Activated naive CD4-positive, alpha-beta T cell treated with anti-CD3 and anti-CD28 coated beads for 36 hours (primary cell): ENCODE measurements at regions of chr11 and their contacts with region 1.

Region 1: GRCh38 chr11:130131961-130132850 is 27.4 kb upstream of the ST14 start:
- DNase-seq: peak; percentile 63
- H3K4me3 Mint-ChIP-seq: no peak overlapping the region
- H3K27ac Mint-ChIP-seq: no peak overlapping the region
- H3K4me1 Mint-ChIP-seq: no peaks in the 10 kb centered on the region
- H3K27me3 Mint-ChIP-seq: no peaks in the 10 kb centered on the region

Region 2: GRCh38 chr11:129364143-129364654 is 768.0 kb before region 1 on chr11:
- CTCF ChIA-PET with region 1: no interaction called
- intact Hi-C with region 1: loop called (anchors 10 kb)
- DNase-seq: peak; percentile 90
- H3K4me3 Mint-ChIP-seq: no peak overlapping the region
- H3K27ac Mint-ChIP-seq: no peak overlapping the region
- H3K4me1 Mint-ChIP-seq: no peaks in the 10 kb centered on the region
- H3K27me3 Mint-ChIP-seq: peaks cover 43% of the 10 kb centered on the region

Region 3: DNA sequence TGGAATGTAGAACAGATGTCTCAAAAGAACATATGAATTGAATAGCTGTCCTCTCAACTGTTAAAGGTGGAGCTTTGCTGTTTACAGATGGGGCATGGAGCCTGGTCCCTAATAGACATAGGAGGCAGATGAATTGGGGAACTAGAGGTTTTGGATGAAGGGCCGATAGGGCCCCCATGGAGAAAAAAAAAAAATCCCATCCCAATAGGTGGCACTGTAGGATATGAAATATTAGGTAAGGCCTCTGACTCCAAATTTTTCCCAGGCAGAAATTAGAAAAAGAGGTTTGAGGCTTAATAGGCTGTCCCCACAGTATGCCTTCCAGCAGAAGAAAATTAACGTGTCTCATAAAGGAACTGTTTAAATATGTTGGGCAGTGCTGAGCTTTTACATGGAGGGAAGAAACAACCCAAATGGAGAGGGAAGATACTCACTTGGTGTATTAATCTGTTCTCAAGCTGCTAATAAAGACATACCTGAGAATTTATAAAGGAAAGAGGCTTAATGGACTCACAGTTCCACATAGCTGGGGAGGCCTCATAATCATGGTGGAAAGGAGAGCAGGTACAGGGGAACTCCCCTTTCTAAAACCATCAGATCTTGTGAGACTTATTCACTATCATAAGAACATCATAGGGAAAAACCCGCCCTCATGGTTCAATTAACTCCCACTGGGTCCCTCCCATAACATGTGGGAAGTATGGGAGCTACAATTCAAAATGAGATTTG is 346.7 kb before region 1 on chr11:
- CTCF ChIA-PET with region 1: interaction called, 6 read pairs
- intact Hi-C with region 1: loop called (anchors 1 kb)
- DNase-seq: no peak
- H3K4me3 Mint-ChIP-seq: no peak overlapping the region
- H3K27ac Mint-ChIP-seq: no peak overlapping the region
- H3K4me1 Mint-ChIP-seq: peaks cover 17% of the 10 kb centered on the region
- H3K27me3 Mint-ChIP-seq: no peaks in the 10 kb centered on the region

Region 4: DNA sequence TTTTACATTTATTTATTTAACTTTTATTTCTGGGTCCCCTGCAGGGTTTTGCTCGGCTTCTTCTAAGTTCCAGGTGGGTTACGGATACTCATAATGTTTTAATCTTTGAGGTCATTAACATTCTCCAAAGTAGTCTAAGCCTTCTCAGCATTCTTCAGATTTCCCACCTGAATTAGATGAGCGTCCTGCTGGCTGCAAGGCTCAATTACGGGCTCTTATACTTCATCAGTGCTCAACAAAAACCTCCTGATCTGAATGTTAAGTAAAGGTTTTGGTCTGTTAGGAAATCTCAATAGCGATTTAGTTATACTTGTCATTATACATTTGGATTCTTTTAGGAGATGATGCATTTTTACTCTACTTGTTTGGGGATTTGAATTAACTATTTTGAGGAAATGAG is 209.5 kb before region 1 on chr11:
- CTCF ChIA-PET with region 1: interaction called, 165 read pairs
- intact Hi-C with region 1: loop called (anchors 1 kb)
- DNase-seq: no peak
- H3K4me3 Mint-ChIP-seq: no peak overlapping the region
- H3K27ac Mint-ChIP-seq: no peak overlapping the region
- H3K4me1 Mint-ChIP-seq: peaks cover 8% of the 10 kb centered on the region
- H3K27me3 Mint-ChIP-seq: no peaks in the 10 kb centered on the region

Region 5: DNA sequence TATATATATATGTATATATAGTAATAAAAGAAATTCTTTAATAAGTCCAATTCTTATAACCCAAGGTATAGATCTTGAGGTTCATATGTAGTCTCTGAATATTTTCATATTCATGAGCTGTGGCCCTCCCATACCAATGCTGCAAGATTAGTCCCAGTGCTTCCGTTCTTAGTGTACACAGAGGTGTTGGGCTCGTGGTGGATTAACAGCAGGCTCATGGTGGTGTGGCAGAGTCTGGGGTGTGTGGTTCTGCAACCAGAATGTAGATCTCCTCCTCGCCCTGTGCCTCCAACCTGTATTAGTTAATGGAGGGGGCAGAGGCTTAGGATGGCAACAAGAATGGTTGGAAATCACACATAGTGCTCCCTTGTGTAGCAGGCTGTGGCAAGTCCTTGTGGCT is 146.4 kb before region 1 on chr11:
- CTCF ChIA-PET with region 1: interaction called, 32 read pairs
- intact Hi-C with region 1: no loop called
- DNase-seq: no peak
- H3K4me3 Mint-ChIP-seq: no peak overlapping the region
- H3K27ac Mint-ChIP-seq: no peak overlapping the region
- H3K4me1 Mint-ChIP-seq: no peaks in the 10 kb centered on the region
- H3K27me3 Mint-ChIP-seq: no peaks in the 10 kb centered on the region

Region 6: DNA sequence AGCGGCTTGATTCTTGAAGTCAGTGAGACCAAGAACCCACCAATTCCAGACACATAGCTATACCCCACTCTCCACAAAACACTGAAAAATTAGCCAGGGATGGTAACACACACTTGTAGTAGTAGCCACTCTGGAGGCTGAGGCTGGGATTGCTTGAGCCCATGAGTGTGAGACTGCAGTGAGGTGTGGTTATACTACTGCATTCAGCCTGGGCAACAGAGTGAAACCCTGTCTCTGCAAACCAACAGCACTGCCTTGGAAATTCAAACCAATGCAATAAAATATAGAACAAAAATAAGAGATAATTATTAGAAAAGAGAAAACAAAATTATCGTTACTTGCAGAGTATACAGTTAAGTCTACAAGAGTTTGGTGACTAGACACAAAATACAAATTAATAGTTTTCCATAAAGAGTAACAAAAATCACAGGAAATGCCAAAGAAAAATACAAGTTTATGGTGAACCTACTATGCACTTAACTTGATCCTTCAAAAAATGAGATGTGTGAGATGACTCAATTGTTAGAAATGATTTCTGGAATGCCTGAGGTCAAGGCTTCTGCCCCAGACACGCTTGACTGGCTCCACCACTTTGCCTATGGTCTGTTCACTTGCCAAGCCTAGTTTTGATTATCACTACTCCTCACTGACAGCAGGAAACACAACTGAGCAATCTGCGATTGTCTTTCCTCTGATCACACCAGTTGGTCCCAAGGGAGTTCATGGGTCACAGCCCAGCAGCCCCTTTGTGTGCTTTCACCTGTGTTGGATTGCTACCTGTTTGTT is 109.2 kb before region 1 on chr11:
- CTCF ChIA-PET with region 1: no interaction called
- intact Hi-C with region 1: no loop called
- DNase-seq: no peak
- H3K4me3 Mint-ChIP-seq: no peak overlapping the region
- H3K27ac Mint-ChIP-seq: no peak overlapping the region
- H3K4me1 Mint-ChIP-seq: no peaks in the 10 kb centered on the region
- H3K27me3 Mint-ChIP-seq: no peaks in the 10 kb centered on the region

Region 7: DNA sequence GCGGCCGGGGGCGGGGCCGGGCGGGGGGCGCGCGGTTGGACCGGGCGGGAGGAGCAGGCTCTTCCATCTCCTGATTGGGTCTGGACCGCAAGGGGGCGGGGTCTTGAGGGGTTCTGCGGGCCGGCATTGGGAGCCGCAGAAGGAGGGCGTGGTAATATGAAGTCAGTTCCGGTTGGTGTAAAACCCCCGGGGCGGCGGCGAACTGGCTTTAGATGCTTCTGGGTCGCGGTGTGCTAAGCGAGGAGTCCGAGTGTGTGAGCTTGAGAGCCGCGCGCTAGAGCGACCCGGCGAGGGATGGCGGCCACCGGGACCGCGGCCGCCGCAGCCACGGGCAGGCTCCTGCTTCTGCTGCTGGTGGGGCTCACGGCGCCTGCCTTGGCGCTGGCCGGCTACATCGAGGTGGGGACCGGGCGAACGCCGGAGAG is 62.5 kb before region 1 on chr11 and contains the start of gene APLP2:
- CTCF ChIA-PET with region 1: interaction called, 7 read pairs
- intact Hi-C with region 1: loop called (anchors 1 kb)
- DNase-seq: peak; percentile 98
- H3K4me3 Mint-ChIP-seq: peak within 1 kb of the TSS; percentile 91
- H3K27ac Mint-ChIP-seq: peak within 1 kb of the TSS; percentile 86
- H3K4me1 Mint-ChIP-seq: peaks cover 23% of the 10 kb centered on the region
- H3K27me3 Mint-ChIP-seq: peaks cover 4% of the 10 kb centered on the region
- total RNA-seq, gene APLP2: 38.4 to 43.5 TPM

Region 8: DNA sequence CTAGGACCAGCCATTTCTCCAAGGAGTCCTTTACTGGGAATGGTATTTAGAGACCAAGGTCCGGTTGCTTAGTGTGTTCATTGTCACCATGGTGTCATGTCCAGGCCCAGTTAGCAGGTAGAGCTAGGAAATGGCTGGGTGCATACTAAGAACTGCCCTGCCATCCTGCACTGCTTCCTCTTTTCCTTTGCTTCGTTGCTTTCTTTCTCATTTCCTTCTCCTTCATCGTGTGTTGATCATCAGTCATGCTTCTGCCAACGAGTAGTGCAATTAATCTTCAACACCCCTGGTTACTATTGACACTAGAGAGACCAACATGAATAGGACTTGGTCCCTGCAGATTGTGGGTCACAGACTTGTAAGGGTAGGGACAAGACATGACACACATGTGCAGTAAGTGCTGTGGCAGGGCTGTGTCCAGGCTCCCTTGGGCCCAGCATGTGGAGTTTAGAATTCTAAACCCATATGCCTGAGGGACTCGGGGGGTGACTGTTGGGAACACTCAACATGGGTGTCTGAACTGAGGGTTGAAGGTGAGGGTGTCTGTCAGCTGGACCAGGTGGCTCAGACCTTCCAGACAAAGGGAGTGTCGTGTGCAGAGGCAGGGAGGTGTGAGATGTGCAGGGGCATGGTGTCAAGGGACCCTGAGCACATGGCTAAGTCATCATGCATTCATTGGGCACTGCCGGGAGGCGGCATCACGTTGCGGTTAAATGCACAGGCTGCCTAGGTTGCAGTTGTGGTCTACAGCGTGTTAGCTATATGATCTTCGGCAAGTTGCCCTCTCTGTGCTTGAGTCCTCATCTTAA is 70.0 kb after region 1 on chr11:
- CTCF ChIA-PET with region 1: no interaction called
- intact Hi-C with region 1: no loop called
- DNase-seq: no peak
- H3K4me3 Mint-ChIP-seq: no peak overlapping the region
- H3K27ac Mint-ChIP-seq: no peak overlapping the region
- H3K4me1 Mint-ChIP-seq: no peaks in the 10 kb centered on the region
- H3K27me3 Mint-ChIP-seq: no peaks in the 10 kb centered on the region